ENCODE measurements at regions of chr11 and their contacts with region 1.

Region 1: DNA sequence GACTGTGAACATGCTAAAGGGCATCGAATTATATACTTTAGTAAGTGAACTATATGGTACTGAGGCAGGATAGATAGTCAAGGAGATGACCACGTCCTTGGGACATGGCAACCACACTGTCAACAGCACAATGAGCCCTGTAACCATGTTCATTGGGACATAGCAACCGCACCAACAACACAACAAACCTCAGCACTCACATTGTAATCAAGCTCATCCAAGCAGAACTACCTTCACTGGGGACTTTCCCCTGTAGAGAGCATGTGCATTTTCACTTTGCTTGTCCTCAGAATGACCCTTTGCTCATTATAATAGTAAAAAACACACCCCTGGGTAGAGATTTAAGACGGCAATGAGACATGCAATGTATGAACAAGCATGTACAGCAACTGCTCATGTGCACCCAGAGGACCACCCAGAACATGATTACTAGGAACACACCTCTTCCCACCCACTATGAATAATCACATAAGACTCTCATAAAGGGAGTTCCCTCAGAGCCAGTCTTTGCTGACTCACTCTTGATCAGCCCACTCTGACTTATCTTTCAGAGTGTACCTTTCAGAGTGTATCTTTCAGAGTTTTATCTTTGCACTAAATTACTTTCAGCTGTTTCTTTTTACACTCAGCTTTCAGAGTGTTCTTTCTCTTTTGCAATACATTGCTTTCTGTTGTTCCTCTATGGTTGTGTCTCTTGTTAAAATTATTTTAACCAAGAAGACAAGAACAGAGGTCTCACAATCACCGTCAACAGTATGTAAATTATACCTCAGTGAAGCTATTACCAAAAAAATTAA is 4.1 kb upstream of the PLAAT2 start:
- DNase-seq: peak; percentile 75
- ATAC-seq: peak; percentile 84
- H3K4me3 Mint-ChIP-seq: peak overlapping the region; percentile 42
- H3K27ac Mint-ChIP-seq: peak overlapping the region; percentile 86
- H3K4me1 Mint-ChIP-seq: peaks cover 40% of the 10 kb centered on the region
- H3K27me3 Mint-ChIP-seq: no peaks in the 10 kb centered on the region
- CTCF ChIP-seq: no peak

Region 2: DNA sequence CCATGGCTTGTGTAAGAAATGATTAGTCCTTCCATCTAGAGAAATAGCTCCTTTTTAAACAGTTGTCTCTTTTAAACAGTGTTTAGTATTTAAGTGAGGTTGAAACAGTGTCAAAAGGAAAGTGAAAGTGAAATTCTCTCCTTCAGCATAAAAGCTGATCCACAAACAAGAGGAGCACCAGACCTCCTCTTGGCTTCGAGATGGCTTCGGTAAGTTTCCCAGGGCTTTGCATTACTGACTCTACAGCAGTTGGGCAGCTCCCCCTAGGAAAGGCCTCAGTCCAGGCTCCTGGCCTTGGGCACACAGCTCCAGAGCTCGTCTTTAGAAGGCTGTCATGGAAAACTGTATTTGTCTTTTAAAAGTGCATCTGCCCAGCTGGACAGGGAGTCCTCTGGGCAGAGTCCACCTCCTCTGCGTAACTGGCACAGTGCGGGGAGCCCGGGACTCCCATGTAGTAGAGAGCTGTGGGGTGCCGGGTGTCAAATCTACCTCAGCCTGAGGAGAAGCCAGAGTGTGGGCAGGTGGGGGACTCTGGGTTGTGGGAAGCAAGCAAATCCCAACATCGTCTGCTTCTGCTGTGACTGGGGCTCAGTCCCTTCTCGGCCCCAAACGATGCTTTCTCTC is 30.5 kb before region 1 on chr11 and contains the start of gene PLAAT4:
- CTCF ChIA-PET with region 1: interaction called, 7 read pairs
- POLR2A ChIA-PET with region 1: interaction called, 17 read pairs
- intact Hi-C with region 1: loop called (anchors 2 kb)
- DNase-seq: no peak
- ATAC-seq: peak; percentile 46
- H3K4me3 Mint-ChIP-seq: peak within 1 kb of the TSS; percentile 80
- H3K27ac Mint-ChIP-seq: peak within 1 kb of the TSS; percentile 87
- H3K4me1 Mint-ChIP-seq: peaks cover 76% of the 10 kb centered on the region
- H3K27me3 Mint-ChIP-seq: no peaks in the 10 kb centered on the region
- CTCF ChIP-seq: no peak
- total RNA-seq, gene PLAAT4: 24.1 to 26.2 TPM

Region 3: GRCh38 chr11:63614136-63614664 is 47.0 kb after region 1 on chr11 and contains the start of gene PLAAT3:
- CTCF ChIA-PET with region 1: no interaction called
- POLR2A ChIA-PET with region 1: no interaction called
- intact Hi-C with region 1: loop called (anchors 10 kb)
- DNase-seq: peak; percentile 52
- ATAC-seq: peak; percentile 72
- H3K4me3 Mint-ChIP-seq: peak within 1 kb of the TSS; percentile 76
- H3K27ac Mint-ChIP-seq: peak within 1 kb of the TSS; percentile 42
- H3K4me1 Mint-ChIP-seq: peaks cover 17% of the 10 kb centered on the region
- H3K27me3 Mint-ChIP-seq: no peaks in the 10 kb centered on the region
- CTCF ChIP-seq: no peak
- total RNA-seq, gene PLAAT3: 4.8 to 6.5 TPM

Region 4: DNA sequence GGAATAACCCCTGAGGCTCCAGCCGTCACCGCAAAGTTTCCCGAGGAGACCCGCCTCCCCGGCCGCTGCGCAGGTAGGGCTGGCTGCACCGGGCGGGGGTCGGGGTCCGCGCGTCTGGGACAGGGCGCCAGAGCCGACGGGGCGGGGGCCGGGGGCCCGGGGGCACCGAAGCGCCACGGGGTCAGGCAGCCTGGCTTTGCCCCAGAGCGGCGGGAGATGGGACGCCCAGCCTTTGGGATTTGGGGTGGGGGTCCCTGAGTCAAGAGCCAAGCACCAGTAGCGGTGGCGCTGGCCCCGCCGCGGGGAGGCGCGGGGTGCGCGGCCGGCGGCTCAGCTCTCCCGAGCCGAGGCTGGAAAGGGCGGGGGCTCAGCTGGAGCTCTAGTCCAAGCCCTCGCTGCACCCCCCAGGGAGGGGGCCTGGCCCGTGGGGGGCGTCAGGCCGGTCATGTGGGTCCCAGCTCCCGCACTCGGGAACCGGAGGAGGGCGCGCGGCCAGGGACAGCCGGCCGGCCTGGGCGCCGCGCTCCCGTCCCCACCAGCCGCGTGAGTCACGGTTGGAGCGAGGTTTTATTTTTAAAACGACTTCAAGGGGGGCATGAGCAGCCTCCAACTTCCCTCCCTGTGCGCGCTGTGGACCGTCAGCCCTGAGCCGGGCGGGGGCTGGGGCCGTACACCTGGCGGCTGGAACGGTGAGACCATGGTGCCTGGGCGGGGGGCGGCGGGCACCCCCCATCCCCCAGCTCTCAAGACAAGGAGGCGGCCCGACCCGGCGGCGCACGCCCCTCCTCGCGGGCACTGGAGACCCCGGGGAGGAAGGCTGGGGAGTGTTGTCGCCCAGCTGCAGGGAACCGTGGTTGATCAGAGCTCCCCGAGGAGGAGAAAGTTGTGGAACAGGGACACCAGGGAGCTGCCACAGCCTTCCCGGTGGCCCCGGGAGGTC is 469.1 kb after region 1 on chr11:
- CTCF ChIA-PET with region 1: no interaction called
- POLR2A ChIA-PET with region 1: no interaction called
- intact Hi-C with region 1: no loop called
- DNase-seq: peak; percentile 21
- ATAC-seq: peak; percentile 66
- H3K4me3 Mint-ChIP-seq: no peak overlapping the region
- H3K27ac Mint-ChIP-seq: no peak overlapping the region
- H3K4me1 Mint-ChIP-seq: peaks cover 5% of the 10 kb centered on the region
- H3K27me3 Mint-ChIP-seq: peaks cover 41% of the 10 kb centered on the region
- CTCF ChIP-seq: no peak